ENCODE measurements at regions of chr5 and their contacts with region 1.

Region 1: GRCh38 chr5:79133657-79134451 is 22.2 kb downstream of the BHMT start:
- DNase-seq: peak; percentile 88
- H3K4me3 Mint-ChIP-seq: peak overlapping the region; percentile 67
- H3K27ac Mint-ChIP-seq: peak overlapping the region; percentile 52
- H3K4me1 Mint-ChIP-seq: peaks cover 12% of the 10 kb centered on the region
- H3K27me3 Mint-ChIP-seq: peaks cover 4% of the 10 kb centered on the region

Region 2: DNA sequence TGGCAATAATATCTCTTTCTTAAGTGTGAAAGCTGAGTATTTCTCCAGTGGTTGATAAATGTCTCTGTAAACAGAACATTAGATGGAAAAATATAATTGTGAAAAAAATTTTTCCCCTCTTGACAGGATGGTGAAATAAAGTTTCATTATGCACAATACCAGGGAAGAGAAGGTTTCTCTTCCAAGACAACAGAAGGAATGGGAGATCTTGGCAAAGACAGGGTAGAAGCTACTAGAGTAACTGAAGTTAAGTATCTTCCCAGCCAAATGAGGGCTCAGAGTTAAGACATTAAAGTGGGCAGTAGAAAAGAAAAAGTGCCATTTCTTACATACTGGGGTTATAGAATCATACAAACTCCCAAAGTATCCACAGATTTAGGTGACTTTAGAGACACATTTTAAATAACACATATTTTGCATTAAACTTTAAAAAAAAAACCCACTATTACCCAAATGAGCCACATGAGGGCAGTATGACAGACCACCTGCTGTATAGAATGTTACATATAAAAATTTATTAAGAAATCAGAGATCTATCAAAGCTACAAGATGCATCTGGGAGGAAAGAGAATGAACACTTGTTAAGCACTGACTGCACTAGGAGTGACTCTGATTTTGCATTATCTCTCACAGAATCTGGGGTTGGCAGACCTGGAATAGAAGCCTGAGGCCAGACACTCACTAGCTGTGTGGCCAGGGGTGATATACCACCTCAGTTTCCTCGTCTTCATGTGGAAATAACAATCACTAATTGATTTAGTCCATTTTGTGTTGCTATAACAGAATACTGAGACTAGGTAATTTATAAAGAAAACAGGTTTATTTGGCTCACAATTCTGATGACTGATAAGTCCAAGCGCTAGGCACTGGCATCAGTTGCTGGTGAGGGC is 247.3 kb before region 1 on chr5:
- CTCF ChIA-PET with region 1: interaction called, 11 read pairs
- intact Hi-C with region 1: loop called (anchors 5 kb)
- DNase-seq: no peak
- H3K4me3 Mint-ChIP-seq: no peak overlapping the region
- H3K27ac Mint-ChIP-seq: no peak overlapping the region
- H3K4me1 Mint-ChIP-seq: peaks cover 13% of the 10 kb centered on the region
- H3K27me3 Mint-ChIP-seq: no peaks in the 10 kb centered on the region

Region 3: DNA sequence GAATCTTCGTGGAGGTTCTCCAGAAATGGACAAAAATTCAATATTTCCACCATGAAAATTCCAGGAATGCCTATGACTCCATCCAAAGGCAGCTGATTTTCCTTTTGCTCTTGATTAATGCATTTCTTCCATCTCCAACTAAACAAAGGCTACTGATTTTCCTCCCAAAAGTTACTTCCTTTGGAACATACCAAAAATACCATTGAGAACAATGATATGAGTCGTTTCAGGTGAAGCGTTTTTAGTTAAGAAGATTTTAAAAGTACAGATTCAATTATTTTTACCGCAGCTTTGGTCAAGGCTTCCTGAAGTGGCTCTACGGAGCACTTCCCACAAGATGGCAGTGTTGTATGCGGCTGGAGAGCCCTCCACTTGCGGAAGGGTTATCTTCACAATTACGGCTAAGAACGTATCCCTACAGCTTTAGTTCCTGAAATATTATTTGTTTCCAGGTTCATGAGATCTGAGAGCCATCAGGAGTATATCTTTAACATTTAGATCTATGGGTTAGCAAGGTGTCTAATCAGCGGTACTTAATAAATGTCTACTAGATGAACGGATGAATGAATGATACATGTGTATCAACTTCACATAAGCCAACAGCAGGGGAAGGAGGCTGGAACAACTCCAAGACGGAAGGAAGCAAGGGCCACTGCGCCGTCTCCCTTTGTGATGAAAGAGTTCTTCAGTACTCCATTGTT is 112.8 kb before region 1 on chr5:
- CTCF ChIA-PET with region 1: interaction called, 312 read pairs
- intact Hi-C with region 1: loop called (anchors 1 kb)
- DNase-seq: peak; percentile 71
- H3K4me3 Mint-ChIP-seq: no peak overlapping the region
- H3K27ac Mint-ChIP-seq: no peak overlapping the region
- H3K4me1 Mint-ChIP-seq: peaks cover 8% of the 10 kb centered on the region
- H3K27me3 Mint-ChIP-seq: peaks cover 46% of the 10 kb centered on the region

Region 4: GRCh38 chr5:79119486-79119885 is 14.4 kb before region 1 on chr5:
- CTCF ChIA-PET with region 1: interaction called, 19 read pairs
- intact Hi-C with region 1: no loop called
- DNase-seq: no peak
- H3K4me3 Mint-ChIP-seq: no peak overlapping the region
- H3K27ac Mint-ChIP-seq: no peak overlapping the region
- H3K4me1 Mint-ChIP-seq: no peaks in the 10 kb centered on the region
- H3K27me3 Mint-ChIP-seq: peaks cover 9% of the 10 kb centered on the region

Region 5: GRCh38 chr5:79235634-79236363 is 101.9 kb after region 1 on chr5 and contains the start of gene JMY:
- CTCF ChIA-PET with region 1: interaction called, 3 read pairs
- intact Hi-C with region 1: loop called (anchors 2 kb)
- DNase-seq: peak; percentile 90
- H3K4me3 Mint-ChIP-seq: peak within 1 kb of the TSS; percentile 91
- H3K27ac Mint-ChIP-seq: peak within 1 kb of the TSS; percentile 99
- H3K4me1 Mint-ChIP-seq: peaks cover 17% of the 10 kb centered on the region
- H3K27me3 Mint-ChIP-seq: no peaks in the 10 kb centered on the region
- total RNA-seq, gene JMY: 11.8 to 12.1 TPM

Region 6: GRCh38 chr5:79464695-79465332 is 331.0 kb after region 1 on chr5:
- CTCF ChIA-PET with region 1: interaction called, 95 read pairs
- intact Hi-C with region 1: loop called (anchors 1 kb)
- DNase-seq: no peak
- H3K4me3 Mint-ChIP-seq: no peak overlapping the region
- H3K27ac Mint-ChIP-seq: no peak overlapping the region
- H3K4me1 Mint-ChIP-seq: peaks cover 2% of the 10 kb centered on the region
- H3K27me3 Mint-ChIP-seq: peaks cover 7% of the 10 kb centered on the region

Region 7: DNA sequence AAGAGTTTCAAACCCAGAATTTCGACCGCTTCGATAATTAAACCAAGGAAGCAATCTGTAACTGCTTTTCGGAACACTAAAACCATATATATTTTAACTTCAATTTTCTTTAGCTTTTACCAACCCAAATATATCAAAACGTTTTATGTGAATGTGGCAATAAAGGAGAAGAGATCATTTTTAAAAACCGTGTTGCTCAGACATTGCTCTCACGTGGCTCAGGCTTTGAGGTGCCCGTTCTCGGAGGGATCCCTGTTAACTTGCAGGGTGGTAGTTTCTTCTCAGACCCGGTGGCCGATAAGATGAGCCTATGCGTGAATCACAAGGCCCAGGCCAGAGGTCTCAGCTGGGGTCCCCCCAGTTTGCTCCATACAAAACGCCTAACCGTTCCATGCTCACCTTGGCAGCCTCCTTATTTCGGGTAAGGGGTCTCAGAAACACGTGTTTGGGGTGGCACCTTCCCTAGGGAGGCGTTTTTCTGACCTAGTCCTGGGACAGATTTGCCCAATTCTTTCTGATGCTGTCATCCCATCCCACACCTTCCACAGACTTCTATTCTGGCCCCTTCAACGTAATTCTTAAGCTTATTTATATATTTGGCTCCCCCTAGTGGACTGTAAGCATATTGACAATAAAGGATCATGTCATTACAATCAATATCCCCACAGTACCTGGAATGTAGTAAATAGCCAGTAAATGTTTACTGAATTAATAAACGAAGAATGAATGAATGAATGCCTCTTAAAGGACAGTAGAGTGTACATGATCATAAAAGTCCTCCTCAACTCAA is 949.4 kb after region 1 on chr5:
- CTCF ChIA-PET with region 1: interaction called, 5 read pairs
- intact Hi-C with region 1: loop called (anchors 1 kb)
- DNase-seq: peak; percentile 23
- H3K4me3 Mint-ChIP-seq: peak overlapping the region; percentile 56
- H3K27ac Mint-ChIP-seq: no peak overlapping the region
- H3K4me1 Mint-ChIP-seq: peaks cover 12% of the 10 kb centered on the region
- H3K27me3 Mint-ChIP-seq: no peaks in the 10 kb centered on the region

Measured in activated naive CD4-positive, alpha-beta T cell treated with anti-CD3 and anti-CD28 coated beads for 36 hours (primary cell).